ENCODE measurements at regions of chr11 and their contacts with region 1.

Region 1: DNA sequence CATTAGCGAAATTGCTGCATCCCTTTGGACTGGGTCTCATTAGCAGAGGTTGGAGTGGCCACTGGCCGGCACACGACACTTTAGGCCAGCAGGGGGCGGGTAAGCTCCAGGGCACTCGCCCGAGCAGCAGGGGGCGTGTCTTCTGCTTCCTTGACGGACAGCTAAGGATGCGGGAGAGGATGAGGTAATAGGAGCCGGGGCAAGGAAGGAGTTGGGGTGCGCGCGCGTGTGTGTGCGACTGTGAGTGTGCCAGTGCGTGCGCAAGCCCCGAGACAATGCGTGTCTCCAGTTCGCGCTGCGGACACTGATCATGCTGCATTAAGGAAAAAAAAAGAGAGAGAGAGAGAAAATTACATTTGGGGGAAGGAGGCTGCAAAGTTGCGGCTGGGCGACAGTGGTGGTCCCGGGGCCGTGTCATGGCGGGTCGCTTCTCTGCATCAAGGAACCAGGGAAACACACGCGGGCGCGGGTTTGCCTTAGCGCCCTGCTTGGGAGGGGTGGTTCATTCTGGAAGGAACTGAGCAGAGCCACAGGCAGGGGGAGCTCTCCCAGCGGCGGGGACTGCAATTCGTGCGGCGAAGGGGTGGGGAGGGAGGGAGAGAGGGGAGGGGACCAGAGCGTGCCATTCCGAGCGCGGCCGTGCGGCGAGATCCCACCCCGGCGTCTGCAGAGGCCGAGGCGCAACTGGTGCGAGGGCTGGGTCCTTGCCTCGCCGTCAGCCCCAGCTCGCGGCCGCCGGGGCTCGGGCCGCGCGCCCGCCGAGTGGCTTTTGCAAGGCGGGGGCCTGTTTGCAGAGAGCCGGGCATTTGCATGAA is at the start of gene DTX4:
- DNase-seq: peak; percentile 87 to 99 (median 94)

Region 2: DNA sequence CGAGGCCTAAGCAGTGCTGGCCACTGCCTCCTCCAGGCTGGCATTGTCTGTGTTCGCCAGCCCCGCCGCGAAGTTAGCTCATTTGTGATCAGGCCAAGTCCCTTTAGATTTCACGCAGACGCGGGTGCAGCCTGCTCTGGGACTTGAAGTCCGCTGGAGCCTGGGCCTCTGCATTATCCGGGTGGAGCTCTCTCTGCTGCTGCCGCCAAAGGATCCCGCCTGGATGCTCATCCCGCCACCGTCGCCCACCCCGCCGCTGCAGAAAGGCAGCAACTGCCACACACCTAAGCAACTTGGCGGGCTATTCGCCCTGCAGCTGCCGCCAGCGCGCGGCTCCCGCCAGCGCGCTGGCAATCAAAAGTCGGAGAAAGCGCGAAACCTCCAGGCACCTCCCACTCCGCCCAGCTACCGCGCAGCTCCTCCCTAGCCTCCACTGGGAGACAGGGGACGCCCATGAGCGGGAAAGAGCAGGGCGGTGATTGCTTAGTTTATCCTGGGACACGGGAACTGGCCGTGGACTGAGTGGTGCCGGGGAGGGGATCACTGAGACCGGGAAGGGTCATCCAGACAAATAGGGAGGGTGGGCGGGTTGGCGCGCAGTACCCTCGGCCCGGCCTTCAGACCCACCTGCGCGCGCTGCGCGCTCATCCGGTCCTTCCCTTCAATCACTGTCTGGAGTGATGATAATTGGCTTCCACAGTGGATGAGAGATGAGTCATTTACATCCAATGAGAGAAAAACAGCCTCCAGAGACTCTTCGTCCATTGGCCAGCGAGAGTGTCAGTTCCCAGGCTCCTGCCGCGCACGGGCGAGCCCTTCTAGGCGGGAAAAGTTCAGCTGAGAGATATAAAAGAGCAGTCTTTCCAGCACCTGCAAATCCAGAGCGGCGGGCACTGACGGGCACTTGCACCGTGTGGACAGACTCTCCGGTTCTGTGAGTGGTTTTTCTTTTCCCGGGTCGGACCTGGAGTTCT is 65.1 kb before region 1 on chr11 and contains the start of gene FAM111B:
- intact Hi-C with region 1: no loop called
- DNase-seq: peak; percentile 68 to 95 (median 81)

Region 3: DNA sequence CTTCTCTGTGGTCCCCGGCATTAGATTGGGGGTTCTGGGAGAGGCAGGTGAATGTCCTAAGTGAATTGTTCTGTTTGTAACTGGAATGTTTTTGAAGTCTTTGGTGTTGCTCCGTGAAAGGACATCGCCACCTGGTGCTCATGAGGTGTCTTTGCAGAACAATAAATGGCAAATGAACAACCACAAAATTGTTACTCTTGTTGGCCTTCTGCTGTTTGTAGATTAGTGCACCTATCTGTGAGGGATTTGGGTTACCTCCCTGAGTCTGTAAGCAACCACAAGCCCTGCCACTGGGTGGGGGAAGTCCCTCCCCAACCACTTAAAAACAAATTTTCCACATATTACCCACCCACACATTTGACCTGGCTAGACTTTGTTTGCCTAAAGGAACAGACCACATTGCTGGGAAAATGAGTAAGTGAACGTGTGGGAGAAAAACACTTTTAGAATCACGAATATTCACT is 36.3 kb after region 1 on chr11:
- intact Hi-C with region 1: loop called (anchors 1 kb)
- DNase-seq: peak in 2 of 10 donors; percentile 32 to 48

Region 4: GRCh38 chr11:59283825-59284772 is 112.4 kb after region 1 on chr11:
- intact Hi-C with region 1: loop called (anchors 1 kb)
- DNase-seq: peak in 2 of 10 donors; percentile 28 to 35